ENCODE measurements at regions of chr13 and their contacts with region 1.

Region 1: GRCh38 chr13:48505597-48506091 is 27.2 kb downstream of the RCBTB2 start:
- DNase-seq: peak; percentile 89
- H3K4me3 Mint-ChIP-seq: peak overlapping the region; percentile 64
- H3K27ac Mint-ChIP-seq: peak overlapping the region; percentile 84
- H3K4me1 Mint-ChIP-seq: peaks cover 66% of the 10 kb centered on the region
- H3K27me3 Mint-ChIP-seq: peaks cover 7% of the 10 kb centered on the region

Region 2: DNA sequence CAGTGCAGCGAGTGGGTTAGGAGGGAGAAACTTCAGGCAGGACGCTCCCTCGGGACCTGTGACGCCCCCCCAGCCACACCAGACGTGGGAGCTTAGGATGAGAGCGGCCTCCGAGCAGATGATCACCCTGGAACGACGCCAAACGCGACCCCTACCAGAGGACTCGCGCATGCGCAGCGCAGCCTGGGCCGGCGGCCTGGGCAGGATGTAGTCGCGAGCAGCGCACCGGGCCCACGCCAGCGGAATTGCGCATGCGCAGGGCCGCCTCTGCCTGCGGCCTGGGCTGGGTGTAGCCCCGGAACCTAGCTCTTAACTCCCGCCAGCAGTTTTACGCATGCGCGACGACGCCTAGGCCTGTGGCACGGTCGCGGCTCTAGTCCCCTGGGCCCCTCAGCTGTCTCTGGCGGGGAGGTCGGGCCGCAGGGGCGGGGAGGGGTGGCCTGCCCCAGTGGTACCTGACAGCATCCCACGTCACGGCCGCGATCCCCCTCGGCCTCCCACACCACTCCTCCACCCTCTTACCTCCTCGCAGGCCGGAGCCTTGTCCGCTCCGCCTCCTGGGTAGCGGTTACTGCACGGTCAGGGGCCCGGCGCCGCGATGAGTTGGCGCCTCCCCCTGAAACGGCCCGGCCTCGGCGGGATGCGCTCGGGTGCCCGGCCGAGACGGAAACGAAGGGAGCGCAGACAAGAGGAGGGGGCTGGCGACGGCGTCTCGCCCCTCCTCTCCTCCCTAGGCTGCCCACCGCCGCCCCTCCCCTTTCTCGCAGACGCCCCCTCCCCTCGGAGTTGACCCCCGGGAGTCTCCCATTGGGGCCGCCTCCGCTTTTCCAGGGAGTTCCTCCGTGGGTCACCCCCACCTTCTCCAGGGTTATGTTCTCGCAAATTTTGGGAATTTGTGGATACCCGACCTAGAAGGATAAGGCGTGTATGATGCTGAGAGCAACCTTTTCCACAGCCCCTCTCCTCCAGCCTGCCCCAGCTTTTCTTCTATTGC is 27.2 kb after region 1 on chr13 and contains the start of gene RCBTB2:
- intact Hi-C with region 1: loop called (anchors 1 kb)
- DNase-seq: peak; percentile 100
- H3K4me3 Mint-ChIP-seq: peak within 1 kb of the TSS; percentile 87
- H3K27ac Mint-ChIP-seq: peak within 1 kb of the TSS; percentile 96
- H3K4me1 Mint-ChIP-seq: peaks cover 26% of the 10 kb centered on the region
- H3K27me3 Mint-ChIP-seq: peaks cover 15% of the 10 kb centered on the region
- total RNA-seq, gene RCBTB2: 1.6 and 1.7 TPM in 2 replicates

Region 3: DNA sequence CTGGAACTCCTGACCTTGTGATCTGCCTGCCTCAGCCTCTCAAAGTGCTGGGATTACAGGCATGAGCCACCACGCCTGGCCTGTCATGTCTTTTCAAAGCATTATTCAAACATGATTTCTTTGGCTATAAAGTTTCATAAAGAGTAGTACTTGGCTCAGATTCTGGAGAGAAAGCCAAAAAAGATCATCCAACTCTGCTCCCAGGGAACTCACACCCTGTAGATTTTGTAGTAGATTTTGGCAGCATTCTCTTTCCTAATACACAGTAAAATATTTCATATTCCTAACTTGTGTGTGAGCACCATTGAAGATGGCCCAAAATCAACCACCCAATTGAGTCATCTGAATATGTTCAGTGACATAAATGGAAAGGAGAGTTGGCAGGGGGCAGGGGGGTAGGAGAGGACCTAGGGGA is 889.8 kb after region 1 on chr13:
- intact Hi-C with region 1: no loop called
- DNase-seq: no peak
- H3K4me3 Mint-ChIP-seq: no peak overlapping the region
- H3K27ac Mint-ChIP-seq: no peak overlapping the region
- H3K4me1 Mint-ChIP-seq: no peaks in the 10 kb centered on the region
- H3K27me3 Mint-ChIP-seq: peaks cover 14% of the 10 kb centered on the region